ENCODE measurements at regions of chr2 and their contacts with region 1.

Region 1: GRCh38 chr2:191363267-191363666 is 118.1 kb downstream of the MYO1B start:
- DNase-seq: no peak
- H3K4me3 ChIP-seq: no peak overlapping the region
- CTCF ChIP-seq: no peak

Region 2: DNA sequence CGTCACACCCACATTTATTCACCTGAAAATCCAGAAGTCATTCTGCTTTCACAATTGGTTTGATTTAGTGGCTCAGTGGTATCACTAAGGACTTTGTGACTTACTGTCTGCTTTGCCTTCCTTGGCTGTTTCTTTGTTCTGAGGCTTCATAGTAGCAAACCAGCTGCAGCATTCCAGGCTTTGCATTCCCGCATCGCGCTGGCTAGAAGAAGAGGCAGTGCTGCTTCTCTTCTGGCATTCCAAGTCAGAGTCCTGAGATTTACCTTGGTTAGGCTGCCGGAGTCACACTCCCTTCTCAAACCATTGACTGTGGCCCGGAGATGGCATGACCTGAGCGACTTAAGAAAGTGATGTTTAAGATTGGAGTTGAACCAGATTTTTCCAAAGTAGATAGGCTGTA is 83.0 kb before region 1 on chr2:
- CTCF ChIA-PET with region 1: no interaction called
- POLR2A ChIA-PET with region 1: no interaction called
- DNase-seq: no peak
- H3K4me3 ChIP-seq: no peak overlapping the region
- CTCF ChIP-seq: no peak

Region 3: DNA sequence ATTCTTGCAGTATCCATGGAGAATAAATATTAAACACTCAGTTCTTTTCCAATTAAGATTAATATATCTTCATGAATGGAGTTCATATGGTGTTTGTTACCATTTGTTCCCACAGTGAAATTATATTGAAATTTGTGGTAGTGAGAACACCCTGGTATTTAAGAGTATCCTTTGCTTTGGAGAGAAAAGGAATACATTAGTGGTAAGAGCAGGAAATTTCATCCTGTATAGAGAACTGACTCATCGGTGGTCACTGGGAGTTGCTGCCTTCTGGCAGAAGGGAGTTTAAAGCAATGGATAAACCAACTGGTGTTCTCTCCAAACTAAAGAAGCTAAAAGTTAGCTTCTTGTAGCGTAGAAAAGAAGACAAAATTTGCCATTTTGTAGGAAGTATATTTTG is 10.7 kb before region 1 on chr2:
- CTCF ChIA-PET with region 1: interaction called, 11 read pairs
- POLR2A ChIA-PET with region 1: no interaction called
- DNase-seq: no peak
- H3K4me3 ChIP-seq: no peak overlapping the region
- CTCF ChIP-seq: no peak

Region 4: GRCh38 chr2:191478799-191479679 is 115.8 kb after region 1 on chr2:
- CTCF ChIA-PET with region 1: no interaction called
- POLR2A ChIA-PET with region 1: no interaction called
- DNase-seq: no peak
- H3K4me3 ChIP-seq: no peak overlapping the region
- CTCF ChIP-seq: no peak